K562 (cell line): ENCODE measurements at regions of chr1 and their contacts with region 1.

Region 1: GRCh38 chr1:157138220-157139051 is at the start of gene ETV3:
- DNase-seq: peak; percentile 90 to 95 (median 91)
- ATAC-seq: peak; percentile 95
- H3K4me3 ChIP-seq: peak within 1 kb of the TSS; percentile 91
- H3K27ac ChIP-seq: peak within 1 kb of the TSS; percentile 89
- H3K4me1 ChIP-seq: peaks cover 24 to 31% of the 10 kb centered on the region in 2 experiments
- H3K27me3 ChIP-seq: no peaks in the 10 kb centered on the region
- CTCF ChIP-seq: no peak
- EP300 ChIP-seq: peak; percentile 26; the same call in 1 of the 2 replicates
- POLR2A ChIP-seq: peak; percentile 86
- RAD21 ChIP-seq: no peak
- polyA plus RNA-seq, gene ETV3: 3.1 to 5.4 TPM

Region 2: DNA sequence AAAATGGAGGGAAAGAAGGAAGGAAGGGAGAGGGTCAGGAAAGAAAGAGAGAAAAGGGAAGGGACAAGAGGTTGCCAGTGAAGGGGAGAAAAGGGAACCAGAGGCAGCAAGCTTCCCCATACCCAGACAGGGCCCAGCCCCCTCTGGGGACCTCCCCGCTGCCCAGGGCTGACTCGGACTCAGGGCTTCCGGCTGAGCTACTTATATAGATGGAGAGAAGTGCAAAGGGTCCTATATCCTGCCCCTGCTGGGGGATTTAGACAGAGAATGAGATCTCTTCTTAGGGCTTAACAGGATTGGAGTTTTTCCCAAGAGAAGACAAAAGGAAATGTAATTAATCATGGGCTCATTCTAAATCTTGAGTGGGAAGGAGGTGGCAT is 38.8 kb before region 1 on chr1 and contains the start of gene ETV3L:
- CTCF ChIA-PET with region 1: no interaction called
- POLR2A ChIA-PET with region 1: interaction called, 5 read pairs
- in situ Hi-C with region 1: loop called (anchors 5 kb)
- intact Hi-C with region 1: no loop called
- DNase-seq: no peak
- ATAC-seq: no peak
- H3K4me3 ChIP-seq: no peak within 1 kb of the TSS
- H3K27ac ChIP-seq: no peak within 1 kb of the TSS
- H3K4me1 ChIP-seq: peaks cover 0 to 4% of the 10 kb centered on the region in 2 experiments; a peak in 1 of 5 replicates
- H3K27me3 ChIP-seq: peaks cover 25 to 59% of the 10 kb centered on the region in 2 experiments
- CTCF ChIP-seq: no peak
- EP300 ChIP-seq: no peak
- POLR2A ChIP-seq: no peak
- RAD21 ChIP-seq: no peak
- polyA plus RNA-seq, gene ETV3L: not detected